Right lobe of liver (tissue), 6 donors: ENCODE measurements at regions of chr11 and their contacts with region 1.

Region 1: DNA sequence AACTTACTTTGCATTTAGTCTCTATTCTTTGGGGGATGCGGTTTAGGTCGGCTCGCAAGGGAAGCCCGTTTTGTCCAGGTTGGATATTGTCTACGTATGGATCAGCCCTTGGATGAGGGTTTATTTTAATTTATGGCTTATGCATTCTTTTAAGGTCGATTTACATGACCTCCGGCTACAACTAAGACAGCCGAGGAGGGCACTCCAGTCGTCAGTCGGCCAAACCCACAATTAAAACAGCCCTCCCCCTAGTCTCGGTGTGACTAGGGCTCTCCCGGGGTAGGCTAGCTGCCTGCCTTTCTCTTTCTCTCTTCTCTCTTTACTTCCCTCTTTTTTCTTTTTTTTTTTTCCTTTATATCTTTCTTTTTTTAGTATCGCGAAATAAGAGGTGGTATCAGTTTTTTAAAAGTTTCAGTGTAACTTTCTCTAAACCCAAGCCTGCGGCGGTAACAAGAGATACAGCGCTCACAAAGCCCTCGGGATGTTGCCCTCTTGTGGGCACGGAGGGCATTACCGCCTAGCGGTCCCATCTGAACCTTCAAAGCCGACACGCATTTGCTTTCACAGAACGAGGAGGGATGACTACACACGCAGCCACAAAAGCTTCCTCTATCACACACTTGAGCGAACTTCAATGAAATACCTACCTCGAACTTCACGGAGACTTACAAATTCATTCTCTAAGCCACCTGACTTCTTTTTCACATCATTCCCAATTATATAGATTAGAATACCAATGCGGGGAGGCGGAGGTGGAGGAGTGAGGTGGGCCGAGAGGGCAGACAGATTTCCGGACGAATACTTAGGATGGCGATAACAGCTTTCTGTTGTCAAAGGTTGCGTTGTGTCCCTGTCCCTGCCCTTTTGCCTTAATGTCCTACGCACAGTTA is 132.3 kb upstream of the C11orf58 start:
- DNase-seq: peak; percentile 86 to 92 (median 87)
- ATAC-seq: peak; percentile 81 to 86 (median 84)
- H3K4me3 ChIP-seq: peak overlapping the region; percentile 58 to 79 (median 65)
- H3K27ac ChIP-seq: peak overlapping the region; percentile 73 to 84 (median 75)
- H3K4me1 ChIP-seq: peaks cover 0 to 18% (median 0%) of the 10 kb centered on the region in 4 donors
- H3K27me3 ChIP-seq: peaks cover 3 to 13% of the 10 kb centered on the region in 2 donors
- CTCF ChIP-seq: peak; percentile 90 to 98 (median 96)
- POLR2A ChIP-seq: no peak

Region 2: DNA sequence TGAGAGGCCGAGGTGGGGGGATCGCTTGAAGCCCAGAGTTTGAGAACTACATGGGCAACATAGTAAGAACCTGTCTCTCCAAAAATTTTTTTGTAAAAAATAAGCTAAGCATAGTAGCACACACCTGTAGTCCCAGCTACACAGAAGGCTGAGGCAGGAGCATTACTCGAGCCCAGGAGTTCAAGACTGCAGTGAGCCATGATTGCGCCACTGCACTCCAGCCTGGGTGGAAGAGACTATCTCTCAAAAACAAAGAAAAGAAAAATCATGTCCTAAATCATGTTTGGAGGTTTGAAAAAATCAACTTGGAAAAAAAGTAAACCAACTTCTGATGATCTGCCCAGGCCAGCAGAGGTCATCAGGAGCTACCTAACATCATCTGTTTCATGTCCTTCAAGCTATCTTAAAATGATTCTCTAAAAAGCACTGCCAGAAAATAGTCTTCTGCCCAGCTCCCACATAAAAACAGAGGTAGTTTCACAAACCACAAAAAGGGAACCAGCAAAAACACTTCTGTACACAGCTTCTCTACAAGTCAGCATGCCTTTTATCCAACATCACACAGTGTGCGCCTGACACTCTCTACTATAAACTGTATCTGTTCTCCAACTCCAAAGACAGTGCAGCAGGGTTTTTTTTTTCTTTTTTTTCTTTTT is 414.8 kb before region 1 on chr11:
- intact Hi-C with region 1: loop called in 1 of 2 experiments (anchors 10 kb)
- DNase-seq: no peak
- ATAC-seq: peak in 3 of 4 donors; percentile 10 to 42 (median 28)
- H3K4me3 ChIP-seq: no peak overlapping the region
- H3K27ac ChIP-seq: no peak overlapping the region
- H3K4me1 ChIP-seq: peaks cover 0 to 7% (median under 1%) of the 10 kb centered on the region in 4 donors
- H3K27me3 ChIP-seq: no peaks in the 10 kb centered on the region
- CTCF ChIP-seq: peak in 3 of 4 donors; percentile 13 to 38 (median 31)
- POLR2A ChIP-seq: no peak

Region 3: DNA sequence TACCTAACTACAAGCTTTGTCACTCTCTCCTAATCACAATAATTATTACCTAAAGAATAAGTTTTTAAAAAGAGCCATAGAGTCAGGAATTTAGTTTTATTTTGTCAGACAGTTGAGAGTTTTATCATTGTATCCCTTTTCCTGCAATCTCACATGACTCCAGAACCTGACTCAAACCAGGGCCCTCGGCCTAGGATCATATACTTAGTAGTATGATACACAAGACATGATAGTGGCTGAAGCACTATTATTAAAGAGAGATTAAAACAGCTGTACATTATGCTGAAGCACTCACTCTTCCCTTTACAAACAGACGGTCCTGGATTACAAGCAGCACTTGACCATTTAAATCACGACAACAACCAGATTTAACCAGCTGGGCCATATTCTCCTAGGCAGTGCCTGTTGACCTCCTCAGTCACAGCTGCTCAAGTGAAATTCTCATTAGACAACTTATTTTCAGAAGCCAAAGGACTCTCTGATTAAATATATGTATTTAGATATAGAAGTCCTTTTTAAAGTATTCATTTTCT is 293.8 kb before region 1 on chr11:
- intact Hi-C with region 1: no loop called
- DNase-seq: no peak
- ATAC-seq: no peak
- H3K4me3 ChIP-seq: no peak overlapping the region
- H3K27ac ChIP-seq: no peak overlapping the region
- H3K4me1 ChIP-seq: no peaks in the 10 kb centered on the region
- H3K27me3 ChIP-seq: no peaks in the 10 kb centered on the region
- CTCF ChIP-seq: no peak
- POLR2A ChIP-seq: no peak

Region 4: DNA sequence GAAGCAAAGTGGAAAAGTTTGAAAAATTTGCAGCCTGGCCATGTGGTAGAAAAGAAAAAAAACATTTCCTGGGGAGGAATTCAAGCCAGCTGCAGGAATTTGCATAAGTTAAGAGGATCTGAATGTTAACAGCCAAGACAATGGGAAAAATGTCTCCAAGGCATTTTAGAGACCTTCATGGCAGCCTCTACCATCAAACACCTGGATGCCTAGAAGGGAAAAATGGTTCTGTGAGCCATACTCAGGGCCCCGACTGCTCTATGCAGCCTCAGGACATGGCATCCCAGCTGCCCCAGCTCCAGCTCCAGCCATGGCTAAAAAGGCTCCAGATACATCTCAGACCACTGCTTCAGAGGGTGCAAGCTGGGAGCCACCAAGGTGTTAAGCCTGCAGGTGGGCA is 100.7 kb before region 1 on chr11:
- intact Hi-C with region 1: no loop called
- DNase-seq: no peak
- ATAC-seq: no peak
- H3K4me3 ChIP-seq: no peak overlapping the region
- H3K27ac ChIP-seq: no peak overlapping the region
- H3K4me1 ChIP-seq: no peaks in the 10 kb centered on the region
- H3K27me3 ChIP-seq: no peaks in the 10 kb centered on the region
- CTCF ChIP-seq: no peak
- POLR2A ChIP-seq: no peak